ENCODE measurements at regions of chr11 and their contacts with region 1.

Region 1: GRCh38 chr11:28756977-28757376 is 648.8 kb downstream of the METTL15 start:
- DNase-seq: peak; percentile 89
- ATAC-seq: peak; percentile 59
- H3K4me3 ChIP-seq: peak overlapping the region; percentile 16; the same call in 1 of the 2 replicates
- H3K27ac ChIP-seq: peak overlapping the region; percentile 79
- H3K4me1 ChIP-seq: peaks cover 66% of the 10 kb centered on the region
- H3K27me3 ChIP-seq: no peaks in the 10 kb centered on the region
- CTCF ChIP-seq: no peak

Region 2: GRCh38 chr11:28878025-28878424 is 121.0 kb after region 1 on chr11:
- CTCF ChIA-PET with region 1: no interaction called
- POLR2A ChIA-PET with region 1: no interaction called
- intact Hi-C with region 1: loop called (anchors 5 kb)
- DNase-seq: peak; percentile 63
- ATAC-seq: peak; percentile 52
- H3K4me3 ChIP-seq: no peak overlapping the region
- H3K27ac ChIP-seq: peak overlapping the region; percentile 45
- H3K4me1 ChIP-seq: peaks cover 29% of the 10 kb centered on the region
- H3K27me3 ChIP-seq: no peaks in the 10 kb centered on the region
- CTCF ChIP-seq: no peak

Measured in PC-3 (cell line).